ENCODE measurements at regions of chr20 and their contacts with region 1.

Region 1: GRCh38 chr20:31849455-31849925 is 4.1 kb upstream of the FOXS1 start:
- DNase-seq: peak in 1 of 2 experiments; percentile 54
- H3K4me3 ChIP-seq: no peak overlapping the region
- H3K27ac ChIP-seq: no peak overlapping the region
- H3K4me1 ChIP-seq: no peaks in the 10 kb centered on the region
- H3K27me3 ChIP-seq: peaks cover 33% of the 10 kb centered on the region
- CTCF ChIP-seq: no peak

Region 2: GRCh38 chr20:32062776-32063170 is 213.3 kb after region 1 on chr20:
- CTCF ChIA-PET with region 1: no interaction called
- POLR2A ChIA-PET with region 1: no interaction called
- intact Hi-C with region 1: no loop called
- DNase-seq: no peak
- H3K4me3 ChIP-seq: no peak overlapping the region
- H3K27ac ChIP-seq: no peak overlapping the region
- H3K4me1 ChIP-seq: peaks cover 5% of the 10 kb centered on the region; the same call in 1 of the 2 replicates
- H3K27me3 ChIP-seq: peaks cover 60% of the 10 kb centered on the region
- CTCF ChIP-seq: no peak

Region 3: DNA sequence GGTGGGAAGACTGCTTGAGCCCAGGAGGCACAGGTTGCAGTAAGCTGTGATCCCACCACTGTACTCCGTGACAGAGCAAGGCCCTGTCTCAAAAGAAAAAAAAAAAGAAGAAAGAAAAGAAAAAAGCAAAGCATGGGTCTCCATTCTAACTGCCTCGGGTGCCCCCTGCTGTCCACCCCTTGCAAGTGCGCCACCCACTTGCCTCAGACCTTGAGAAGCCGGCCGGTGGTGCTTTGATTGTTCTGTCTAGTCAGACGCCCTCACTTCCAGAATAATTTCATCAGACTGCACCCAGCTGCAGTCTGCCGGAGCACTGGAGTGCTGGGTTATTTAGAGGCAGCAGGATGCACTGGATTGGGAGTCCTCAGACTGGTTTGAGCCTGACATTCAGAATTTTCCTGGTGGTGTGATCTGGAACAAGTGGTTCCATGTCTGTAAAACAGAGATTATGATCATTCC is 242.4 kb after region 1 on chr20:
- CTCF ChIA-PET with region 1: no interaction called
- POLR2A ChIA-PET with region 1: no interaction called
- intact Hi-C with region 1: loop called (anchors 2 kb)
- DNase-seq: peak; percentile 59 to 83
- H3K4me3 ChIP-seq: no peak overlapping the region
- H3K27ac ChIP-seq: no peak overlapping the region
- H3K4me1 ChIP-seq: no peaks in the 10 kb centered on the region
- H3K27me3 ChIP-seq: peaks cover 40% of the 10 kb centered on the region
- CTCF ChIP-seq: peak; percentile 91

Measured in PC-9 (cell line).